ENCODE measurements at regions of chr4 and their contacts with region 1.

Region 1: DNA sequence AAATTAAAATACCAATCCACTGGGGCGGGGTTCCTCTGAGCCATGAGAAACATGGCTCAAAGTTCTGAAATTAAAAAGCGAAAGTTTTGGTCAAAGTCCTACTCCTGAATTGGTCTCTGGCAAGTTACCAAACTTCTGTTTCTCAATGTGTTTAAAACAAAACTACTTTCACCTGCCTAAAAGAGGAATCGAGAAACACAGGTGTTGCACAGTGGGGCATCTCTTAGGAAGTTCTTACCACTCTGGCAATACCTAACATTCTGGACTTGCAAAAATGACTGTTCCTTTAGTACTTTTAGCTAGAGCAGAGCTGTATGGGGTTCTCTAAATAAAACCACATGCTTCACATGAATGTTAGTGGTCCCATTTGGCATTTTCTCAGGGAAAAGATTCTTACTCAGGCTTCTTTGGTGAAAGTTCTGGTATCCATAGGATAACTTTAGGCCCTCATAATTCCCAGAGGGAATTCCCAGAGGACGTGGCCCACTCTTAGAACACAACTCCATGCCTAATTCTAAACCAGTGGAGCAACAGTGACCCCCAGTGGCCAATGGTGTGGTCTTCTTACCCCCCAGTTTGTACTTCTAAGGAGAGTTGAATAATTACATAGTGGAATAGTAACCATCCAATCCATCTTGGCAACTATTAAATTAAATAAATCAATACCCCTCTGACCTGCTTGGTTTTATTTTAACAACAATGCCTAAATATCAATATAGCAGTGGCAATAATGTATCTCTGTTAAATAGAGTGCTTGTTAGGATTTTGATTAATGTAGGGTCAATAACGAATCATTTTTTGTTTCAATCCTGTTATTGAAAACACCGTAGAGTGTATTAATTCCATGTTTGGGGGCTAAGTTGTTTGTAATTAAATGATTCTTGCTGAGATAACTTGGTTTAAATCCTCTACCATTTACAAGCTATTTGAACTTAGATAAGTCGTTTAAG is 21.9 kb downstream of the BMP3 start:
- DNase-seq: peak; percentile 91
- ATAC-seq: peak; percentile 99
- H3K4me3 ChIP-seq: no peak overlapping the region
- H3K27ac ChIP-seq: no peak overlapping the region; the same call in 1 of the 2 replicates
- H3K4me1 ChIP-seq: peaks cover 14% of the 10 kb centered on the region
- H3K27me3 ChIP-seq: no peaks in the 10 kb centered on the region
- CTCF ChIP-seq: peak; percentile 61 to 73 (median 66)
- EP300 ChIP-seq: peak; percentile 84 to 91; a peak in 3 of 4 replicates
- POLR2A ChIP-seq: no peak
- RAD21 ChIP-seq: peak; percentile 76

Region 2: DNA sequence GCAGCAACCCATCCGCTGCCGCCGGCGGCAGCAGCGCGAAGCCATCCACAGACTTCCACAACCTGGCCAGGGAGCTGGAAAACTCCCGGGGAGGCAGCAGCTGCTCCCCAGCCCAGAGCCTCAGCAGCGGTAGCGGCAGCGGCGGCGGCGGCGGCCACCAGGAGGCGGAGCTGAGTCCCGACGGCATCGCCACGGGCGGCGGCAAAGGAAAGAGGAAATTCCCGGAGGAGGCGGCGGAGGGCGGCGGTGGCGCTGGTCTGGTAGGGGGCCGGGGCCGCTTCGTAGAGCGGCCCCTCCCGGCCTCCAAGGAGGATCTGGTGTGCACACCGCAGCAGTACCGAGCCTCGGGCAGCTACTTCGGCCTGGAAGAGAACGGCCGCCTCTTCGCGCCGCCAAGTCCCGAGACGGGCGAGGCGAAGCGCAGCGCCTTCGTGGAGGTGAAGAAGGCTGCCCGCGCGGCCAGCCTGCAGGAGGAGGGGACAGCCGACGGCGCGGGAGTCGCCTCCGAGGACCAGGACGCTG is 850.1 kb before region 1 on chr4:
- CTCF ChIA-PET with region 1: no interaction called
- POLR2A ChIA-PET with region 1: no interaction called
- RAD21 ChIA-PET with region 1: interaction called, 3 read pairs
- SMC1A ChIA-PET with region 1: no interaction called
- in situ Hi-C with region 1: no loop called
- intact Hi-C with region 1: loop called (anchors 5 kb)
- DNase-seq: no peak
- ATAC-seq: peak; percentile 85
- H3K4me3 ChIP-seq: peak overlapping the region; percentile 71
- H3K27ac ChIP-seq: no peak overlapping the region
- H3K4me1 ChIP-seq: 0 out of 2 replicates have a peak, but pooled peaks cover 3% of the 10 kb centered on the region
- H3K27me3 ChIP-seq: peaks cover 0 to 13% of the 10 kb centered on the region in 2 experiments; a peak in 3 of 4 replicates
- CTCF ChIP-seq: peak; percentile 65 to 81 (median 66)
- EP300 ChIP-seq: no peak
- POLR2A ChIP-seq: no peak
- RAD21 ChIP-seq: peak; percentile 25; the same call in 1 of the 2 replicates

Region 3: DNA sequence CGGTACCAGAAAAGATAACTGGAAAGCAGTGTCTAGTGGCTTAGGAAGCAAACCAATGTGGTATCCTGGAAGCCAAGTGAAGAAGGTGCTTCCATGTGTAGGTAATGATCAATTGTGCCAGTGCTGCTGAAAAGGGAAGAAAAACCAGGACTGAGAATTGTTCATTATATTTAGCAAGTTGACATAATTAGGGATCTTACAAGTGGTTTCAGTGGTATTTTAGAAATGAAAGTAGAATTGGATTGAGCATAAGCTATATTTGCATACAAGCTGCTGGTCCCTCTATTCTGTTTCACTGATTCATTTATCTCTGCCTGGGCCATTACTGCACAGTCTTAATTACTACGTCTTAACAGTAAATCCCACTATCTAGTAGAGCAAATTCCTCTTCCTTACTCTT is 822.8 kb before region 1 on chr4:
- CTCF ChIA-PET with region 1: interaction called, 4 read pairs
- POLR2A ChIA-PET with region 1: no interaction called
- RAD21 ChIA-PET with region 1: no interaction called
- SMC1A ChIA-PET with region 1: interaction called, 5 read pairs
- in situ Hi-C with region 1: no loop called
- intact Hi-C with region 1: loop called (anchors 5 kb)
- DNase-seq: peak; percentile 60
- ATAC-seq: peak; percentile 94
- H3K4me3 ChIP-seq: no peak overlapping the region
- H3K27ac ChIP-seq: peak overlapping the region; percentile 49
- H3K4me1 ChIP-seq: peaks cover 23% of the 10 kb centered on the region
- H3K27me3 ChIP-seq: no peaks in the 10 kb centered on the region
- CTCF ChIP-seq: no peak
- EP300 ChIP-seq: peak; percentile 86 to 89
- POLR2A ChIP-seq: no peak
- RAD21 ChIP-seq: no peak

Region 4: GRCh38 chr4:81030061-81030980 is 22.1 kb before region 1 on chr4 and contains the start of gene BMP3:
- CTCF ChIA-PET with region 1: interaction called, 11 read pairs
- POLR2A ChIA-PET with region 1: no interaction called
- RAD21 ChIA-PET with region 1: interaction called, 4 read pairs
- SMC1A ChIA-PET with region 1: interaction called, 144 read pairs
- in situ Hi-C with region 1: no loop called
- intact Hi-C with region 1: no loop called
- DNase-seq: no peak
- ATAC-seq: peak; percentile 61
- H3K4me3 ChIP-seq: peak within 1 kb of the TSS; percentile 65
- H3K27ac ChIP-seq: no peak within 1 kb of the TSS
- H3K4me1 ChIP-seq: no peaks in the 10 kb centered on the region
- H3K27me3 ChIP-seq: peaks cover 6 to 7% of the 10 kb centered on the region in 2 experiments; a peak in 3 of 4 replicates
- CTCF ChIP-seq: no peak
- EP300 ChIP-seq: no peak
- POLR2A ChIP-seq: no peak
- RAD21 ChIP-seq: no peak
- polyA plus RNA-seq, gene BMP3: 0.37 to 1.3 TPM

Region 5: GRCh38 chr4:81946996-81947395 is 894.6 kb after region 1 on chr4:
- CTCF ChIA-PET with region 1: no interaction called
- POLR2A ChIA-PET with region 1: no interaction called
- RAD21 ChIA-PET with region 1: no interaction called
- SMC1A ChIA-PET with region 1: no interaction called
- in situ Hi-C with region 1: no loop called
- intact Hi-C with region 1: no loop called
- DNase-seq: no peak
- ATAC-seq: no peak
- H3K4me3 ChIP-seq: no peak overlapping the region
- H3K27ac ChIP-seq: no peak overlapping the region
- H3K4me1 ChIP-seq: no peaks in the 10 kb centered on the region
- H3K27me3 ChIP-seq: no peaks in the 10 kb centered on the region
- CTCF ChIP-seq: no peak
- EP300 ChIP-seq: no peak
- POLR2A ChIP-seq: no peak
- RAD21 ChIP-seq: no peak